Endothelial cell of umbilical vein (primary cell): ENCODE measurements at regions of chr6 and their contacts with region 1.

Region 1: DNA sequence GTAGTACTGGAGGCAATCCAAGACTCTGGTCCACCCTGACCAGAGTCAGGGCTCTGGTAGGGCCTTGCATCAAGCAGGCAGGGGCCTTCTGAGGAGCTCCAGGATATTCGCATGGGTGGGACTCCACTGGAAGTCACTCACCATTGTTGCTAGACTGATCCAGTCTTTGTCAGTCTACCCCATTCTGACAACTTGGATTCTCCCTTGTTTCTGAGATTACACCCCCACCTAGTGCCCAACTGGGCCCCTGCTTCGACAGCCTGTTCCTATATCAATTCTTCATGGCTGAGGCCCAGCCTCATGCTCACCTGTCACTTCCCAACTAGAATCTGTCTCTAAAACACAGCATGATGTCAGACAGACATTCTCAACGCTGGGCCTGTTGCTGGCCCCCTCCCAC is 5.2 kb downstream of the SLC35D3 start:
- DNase-seq: peak; percentile 17
- H3K4me3 ChIP-seq: no peak overlapping the region
- H3K27ac ChIP-seq: no peak overlapping the region
- H3K4me1 ChIP-seq: peaks cover 6% of the 10 kb centered on the region
- H3K27me3 ChIP-seq: peaks cover 18 to 32% of the 10 kb centered on the region in 2 experiments
- CTCF ChIP-seq: peak in 1 of 2 donors; percentile 39
- POLR2A ChIP-seq: no peak

Region 2: DNA sequence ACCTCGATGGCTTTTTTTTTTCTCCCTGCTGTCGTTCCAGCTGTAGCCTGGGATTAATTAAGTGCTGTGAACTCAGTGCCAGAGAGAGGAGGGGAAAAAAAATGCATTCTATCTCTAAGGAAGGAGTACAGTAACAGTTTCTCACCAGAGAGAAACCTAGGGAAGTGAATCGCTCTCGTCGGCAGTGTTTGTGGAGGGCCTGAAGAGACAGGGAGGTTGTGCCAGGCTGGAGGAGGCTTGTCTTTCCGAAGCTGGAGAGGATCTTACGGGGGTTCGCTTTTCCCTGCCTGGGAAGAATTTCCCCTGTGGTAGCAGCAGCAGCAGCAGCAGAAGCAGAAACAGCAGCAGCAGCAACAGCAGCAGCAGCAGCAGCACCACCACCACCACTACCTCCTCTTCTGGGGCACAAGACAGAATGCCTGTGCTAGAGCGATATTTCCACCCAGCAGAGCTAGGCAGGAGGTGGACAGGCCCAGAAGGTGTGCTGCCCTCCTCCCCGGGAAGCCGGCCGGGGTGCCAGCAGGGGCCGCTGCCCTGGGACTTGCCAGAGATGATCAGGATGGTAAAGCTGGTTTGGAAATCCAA is 889.3 kb before region 1 on chr6:
- CTCF ChIA-PET with region 1: no interaction called
- POLR2A ChIA-PET with region 1: no interaction called
- dilution Hi-C with region 1: no loop called
- intact Hi-C with region 1: no loop called
- DNase-seq: peak; percentile 70
- H3K4me3 ChIP-seq: peak overlapping the region; percentile 53 to 97 (median 56)
- H3K27ac ChIP-seq: peak overlapping the region; percentile 93
- H3K4me1 ChIP-seq: peaks cover 70% of the 10 kb centered on the region
- H3K27me3 ChIP-seq: no peaks in the 10 kb centered on the region
- CTCF ChIP-seq: peak; percentile 20 to 39
- POLR2A ChIP-seq: no peak

Region 3: DNA sequence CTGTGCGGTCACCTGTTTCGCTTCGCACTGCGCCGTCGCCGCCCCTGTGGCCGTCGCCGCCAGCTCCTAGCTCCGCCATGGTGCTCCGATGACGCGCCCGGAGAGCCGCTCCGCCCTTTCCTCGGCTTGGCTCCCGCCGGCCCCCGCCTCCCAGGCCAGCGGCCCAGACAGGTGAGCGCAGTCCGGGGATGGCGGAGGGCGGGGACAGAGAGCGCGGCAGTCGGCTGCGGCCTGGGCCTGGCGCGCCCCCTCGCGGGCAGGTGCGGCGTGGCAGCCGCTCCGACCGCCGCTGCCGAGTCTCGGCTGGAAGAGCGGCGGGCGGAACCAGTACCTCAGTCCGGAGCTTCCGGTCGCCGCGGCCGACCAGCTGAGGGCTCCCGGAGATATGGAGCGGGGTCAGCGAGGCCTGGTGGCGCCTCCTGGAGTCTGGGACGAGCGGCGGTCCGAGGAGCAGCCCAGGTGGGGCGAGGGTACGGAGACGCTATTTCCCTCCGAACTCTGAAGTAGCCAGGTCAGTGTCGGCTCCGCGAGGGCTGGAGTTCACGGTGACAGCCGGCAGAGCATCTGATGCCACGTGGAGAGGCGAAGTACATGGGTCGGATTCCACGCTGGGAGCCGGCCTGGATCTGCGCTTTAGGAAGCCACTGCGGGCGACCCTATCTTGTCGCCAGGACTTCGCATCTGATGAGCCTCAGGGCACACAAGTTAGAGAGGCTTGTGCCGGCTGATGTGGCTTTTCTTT is 376.8 kb before region 1 on chr6 and contains the start of gene MAP7:
- CTCF ChIA-PET with region 1: no interaction called
- POLR2A ChIA-PET with region 1: no interaction called
- dilution Hi-C with region 1: no loop called
- intact Hi-C with region 1: loop called (anchors 10 kb)
- DNase-seq: peak; percentile 30
- H3K4me3 ChIP-seq: peak within 1 kb of the TSS; percentile 37 to 72 (median 46)
- H3K27ac ChIP-seq: no peak within 1 kb of the TSS
- H3K4me1 ChIP-seq: peaks cover 13% of the 10 kb centered on the region
- H3K27me3 ChIP-seq: peaks cover 27 to 36% of the 10 kb centered on the region in 2 experiments
- CTCF ChIP-seq: peak; percentile 56 to 83
- POLR2A ChIP-seq: no peak
- total RNA-seq, gene MAP7: 0.30 and 0.42 TPM in 2 replicates

Region 4: DNA sequence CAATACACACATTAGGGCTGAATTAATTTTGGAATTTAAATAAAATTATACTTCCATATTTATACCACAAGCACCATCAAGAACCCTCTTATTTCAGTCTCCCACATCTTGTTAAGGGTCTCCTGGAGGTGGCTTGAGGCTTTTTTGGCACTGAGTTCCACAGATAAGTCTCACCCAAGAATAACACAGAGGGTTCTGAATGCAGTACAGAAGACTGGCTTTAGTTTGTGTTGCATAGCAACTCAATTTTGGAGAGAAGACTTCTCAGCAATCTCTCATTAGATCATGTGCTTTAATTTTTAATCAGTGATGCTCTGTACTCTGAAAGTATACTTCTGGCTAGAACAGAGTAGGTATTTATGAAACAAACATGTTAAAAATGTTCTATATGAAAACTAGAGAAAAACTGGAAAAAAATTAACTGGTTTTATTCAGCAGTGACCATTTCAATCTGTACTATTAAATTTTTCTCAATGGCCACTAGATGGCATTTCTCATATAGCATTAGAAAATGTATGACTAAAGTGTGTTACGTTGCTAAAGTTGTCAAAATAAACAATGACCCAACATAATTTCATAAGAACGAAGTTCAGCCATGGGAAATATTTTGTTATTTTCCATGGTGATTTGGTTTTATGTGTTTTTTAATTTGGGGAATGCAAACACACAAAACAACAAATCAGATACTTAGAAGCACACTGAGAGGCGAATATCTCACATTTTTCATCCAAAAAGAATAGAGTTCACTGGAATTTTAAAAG is 344.4 kb before region 1 on chr6:
- CTCF ChIA-PET with region 1: no interaction called
- POLR2A ChIA-PET with region 1: no interaction called
- dilution Hi-C with region 1: no loop called
- intact Hi-C with region 1: loop called (anchors 10 kb)
- DNase-seq: peak; percentile 77
- H3K4me3 ChIP-seq: no peak overlapping the region
- H3K27ac ChIP-seq: peak overlapping the region; percentile 89
- H3K4me1 ChIP-seq: peaks cover 4% of the 10 kb centered on the region
- H3K27me3 ChIP-seq: no peaks in the 10 kb centered on the region
- CTCF ChIP-seq: peak; percentile 26 to 31
- POLR2A ChIP-seq: no peak

Region 5: GRCh38 chr6:136822376-136823127 is 104.7 kb before region 1 on chr6 and contains the start of gene PEX7:
- CTCF ChIA-PET with region 1: interaction called, 6 read pairs
- POLR2A ChIA-PET with region 1: no interaction called
- dilution Hi-C with region 1: no loop called
- intact Hi-C with region 1: loop called (anchors 10 kb)
- DNase-seq: peak; percentile 92
- H3K4me3 ChIP-seq: peak within 1 kb of the TSS; percentile 35 to 89 (median 65)
- H3K27ac ChIP-seq: peak within 1 kb of the TSS; percentile 52
- H3K4me1 ChIP-seq: peaks cover 10% of the 10 kb centered on the region
- H3K27me3 ChIP-seq: no peaks in the 10 kb centered on the region
- CTCF ChIP-seq: peak; percentile 67 to 86
- POLR2A ChIP-seq: peak; percentile 73
- total RNA-seq, gene PEX7: 3.5 and 3.7 TPM in 2 replicates

Region 6: GRCh38 chr6:136873748-136874147 is 53.5 kb before region 1 on chr6:
- CTCF ChIA-PET with region 1: no interaction called
- POLR2A ChIA-PET with region 1: no interaction called
- dilution Hi-C with region 1: no loop called
- intact Hi-C with region 1: no loop called
- DNase-seq: peak; percentile 26
- H3K4me3 ChIP-seq: no peak overlapping the region
- H3K27ac ChIP-seq: no peak overlapping the region
- H3K4me1 ChIP-seq: no peaks in the 10 kb centered on the region
- H3K27me3 ChIP-seq: no peaks in the 10 kb centered on the region
- CTCF ChIP-seq: no peak
- POLR2A ChIP-seq: no peak

Region 7: DNA sequence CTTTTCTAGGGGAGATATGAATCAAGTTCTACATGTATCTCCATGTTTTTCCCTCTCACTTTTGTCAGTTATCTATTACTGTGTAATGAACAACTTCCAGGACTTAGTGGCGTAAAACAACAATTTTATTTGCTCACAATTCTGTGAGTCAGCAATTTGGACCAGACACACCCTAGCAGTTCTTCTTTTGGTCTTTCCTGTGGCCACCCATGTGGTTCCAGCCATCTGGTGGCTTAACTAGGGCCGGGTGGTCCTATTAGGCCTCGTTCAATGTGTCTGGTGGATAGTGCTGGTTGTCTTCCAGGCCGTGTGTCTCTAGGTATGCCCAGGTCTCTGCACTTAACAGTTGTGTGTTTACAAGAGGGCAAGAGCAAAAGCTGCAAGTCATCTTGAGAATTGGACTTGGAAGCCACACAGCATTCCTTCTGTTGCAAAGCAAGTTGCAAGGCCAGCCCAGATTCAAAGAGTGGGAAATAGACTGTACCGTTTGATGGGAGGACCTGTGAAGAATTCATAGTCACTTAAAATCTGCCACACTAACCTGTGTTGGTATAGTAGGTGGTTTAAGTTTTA is 26.0 kb before region 1 on chr6:
- CTCF ChIA-PET with region 1: no interaction called
- POLR2A ChIA-PET with region 1: no interaction called
- dilution Hi-C with region 1: no loop called
- intact Hi-C with region 1: no loop called
- DNase-seq: no peak
- H3K4me3 ChIP-seq: no peak overlapping the region
- H3K27ac ChIP-seq: no peak overlapping the region
- H3K4me1 ChIP-seq: no peaks in the 10 kb centered on the region
- H3K27me3 ChIP-seq: no peaks in the 10 kb centered on the region
- CTCF ChIP-seq: no peak
- POLR2A ChIP-seq: no peak

Region 8: GRCh38 chr6:136914947-136915346 is 12.3 kb before region 1 on chr6:
- CTCF ChIA-PET with region 1: interaction called, 10 read pairs
- POLR2A ChIA-PET with region 1: no interaction called
- dilution Hi-C with region 1: no loop called
- intact Hi-C with region 1: no loop called
- DNase-seq: no peak
- H3K4me3 ChIP-seq: no peak overlapping the region
- H3K27ac ChIP-seq: no peak overlapping the region
- H3K4me1 ChIP-seq: no peaks in the 10 kb centered on the region
- H3K27me3 ChIP-seq: peaks cover 0 to 4% of the 10 kb centered on the region in 2 experiments
- CTCF ChIP-seq: no peak
- POLR2A ChIP-seq: no peak

Region 9: DNA sequence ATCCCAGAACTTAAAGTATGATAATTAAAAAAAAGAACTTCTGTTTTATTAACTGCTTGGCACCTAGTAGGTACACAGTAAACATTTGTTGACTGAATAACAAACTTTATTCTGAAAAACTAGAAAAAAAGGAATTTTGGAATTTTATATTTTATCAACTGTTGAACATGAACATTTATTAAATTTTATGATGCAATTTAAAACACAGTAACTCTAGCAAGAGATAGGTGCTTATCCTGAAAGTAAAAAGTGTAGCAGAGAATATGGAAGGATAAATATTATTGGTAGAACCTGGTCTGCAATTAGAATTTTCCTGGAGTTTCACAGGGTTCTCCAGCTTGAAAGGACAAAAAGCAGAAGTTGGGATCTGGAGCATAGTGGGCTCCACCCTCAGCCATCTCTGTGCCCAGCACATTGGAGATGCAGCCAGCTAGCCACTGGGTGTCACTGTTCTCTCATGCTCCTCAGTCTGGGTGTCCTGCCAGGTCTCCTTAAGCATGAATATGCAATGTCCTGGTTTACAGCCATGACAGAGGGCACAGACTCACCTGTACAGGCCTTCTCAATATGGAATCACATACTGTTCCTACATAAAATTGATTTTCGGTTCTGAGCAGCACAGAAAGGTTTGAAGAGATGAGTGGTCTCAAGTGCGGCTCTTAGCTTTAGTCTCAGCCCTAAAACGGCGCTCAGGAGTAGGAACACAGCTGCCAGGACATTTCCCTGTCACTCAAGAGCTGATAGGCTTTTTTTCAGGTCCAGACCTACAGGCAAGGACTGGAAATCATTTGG is 149.2 kb after region 1 on chr6:
- CTCF ChIA-PET with region 1: no interaction called
- POLR2A ChIA-PET with region 1: no interaction called
- dilution Hi-C with region 1: no loop called
- intact Hi-C with region 1: no loop called
- DNase-seq: peak; percentile 60
- H3K4me3 ChIP-seq: no peak overlapping the region
- H3K27ac ChIP-seq: no peak overlapping the region
- H3K4me1 ChIP-seq: no peaks in the 10 kb centered on the region
- H3K27me3 ChIP-seq: peaks cover 2% of the 10 kb centered on the region in 2 experiments
- CTCF ChIP-seq: peak; percentile 67 to 76
- POLR2A ChIP-seq: no peak